KBM-7 (cell line): ENCODE measurements at regions of chr11 and their contacts with region 1.

Region 1: DNA sequence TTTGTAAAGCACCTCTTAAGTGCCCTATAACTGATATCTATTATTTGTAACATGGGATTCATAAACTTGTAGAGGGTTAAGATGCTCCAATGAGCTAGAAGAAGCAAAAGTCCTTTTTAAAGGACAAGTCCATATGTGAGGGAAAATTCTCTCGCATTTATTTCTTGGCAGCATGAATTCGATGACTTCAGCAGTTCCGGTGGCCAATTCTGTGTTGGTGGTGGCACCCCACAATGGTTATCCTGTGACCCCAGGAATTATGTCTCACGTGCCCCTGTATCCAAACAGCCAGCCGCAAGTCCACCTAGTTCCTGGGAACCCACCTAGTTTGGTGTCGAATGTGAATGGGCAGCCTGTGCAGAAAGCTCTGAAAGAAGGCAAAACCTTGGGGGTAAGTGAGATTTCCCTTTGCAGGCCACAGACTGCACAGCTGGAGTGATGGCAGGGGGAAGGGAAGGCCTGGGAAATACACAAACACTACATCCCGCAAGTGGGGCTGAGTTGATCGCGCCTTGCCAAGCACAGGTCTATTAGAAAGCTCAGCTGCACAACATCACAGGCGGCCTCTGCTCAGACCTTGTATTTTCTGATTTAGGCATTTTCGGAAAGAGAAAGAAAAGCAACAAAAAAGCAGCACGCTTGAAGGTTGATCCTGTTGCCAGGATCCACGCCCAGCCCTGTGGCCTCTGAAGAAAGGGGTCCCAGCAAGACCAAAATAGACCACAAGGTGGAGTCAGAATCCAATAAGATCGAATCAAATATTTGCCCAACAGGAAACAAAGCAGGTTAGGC is 1.5 kb downstream of the MS4A8 start:
- DNase-seq: peak; percentile 68

Region 2: GRCh38 chr11:61187505-61188130 is 486.7 kb after region 1 on chr11:
- in situ Hi-C with region 1: loop called (anchors 25 kb)
- DNase-seq: peak; percentile 83